ENCODE measurements at regions of chr16 and their contacts with region 1.

Region 1: GRCh38 chr16:2777231-2777902 is at the start of gene ELOB:
- DNase-seq: peak; percentile 88 to 95 (median 92)
- ATAC-seq: peak; percentile 82 to 95 (median 92)
- H3K4me3 ChIP-seq: peak within 1 kb of the TSS; percentile 65 to 100 (median 93)
- H3K27ac ChIP-seq: peak within 1 kb of the TSS; percentile 96 to 100 (median 100)
- H3K4me1 ChIP-seq: peaks cover 2 to 44% (median 26%) of the 10 kb centered on the region in 12 donors
- H3K27me3 ChIP-seq: no peaks in the 10 kb centered on the region
- CTCF ChIP-seq: no peak
- POLR2A ChIP-seq: peak; percentile 5 to 80
- total RNA-seq, gene ELOB: 213 to 1,067 (median 294) TPM

Region 2: GRCh38 chr16:2720719-2721633 is 56.4 kb before region 1 on chr16:
- intact Hi-C with region 1: loop called in 1 of 10 experiments (anchors 2 kb)
- DNase-seq: peak; percentile 83 to 91 (median 86)
- ATAC-seq: peak; percentile 68 to 92 (median 84)
- H3K4me3 ChIP-seq: peak overlapping the region; percentile 48 to 90 (median 66)
- H3K27ac ChIP-seq: peak overlapping the region in 11 of 12 donors; percentile 22 to 85 (median 74)
- H3K4me1 ChIP-seq: peaks cover 0 to 27% (median 13%) of the 10 kb centered on the region in 12 donors
- H3K27me3 ChIP-seq: peaks cover 0 to 8% (median 0%) of the 10 kb centered on the region in 9 donors
- CTCF ChIP-seq: peak; percentile 34 to 92 (median 80)
- POLR2A ChIP-seq: no peak

Region 3: GRCh38 chr16:2911580-2912329 is 134.4 kb after region 1 on chr16 and contains the start of gene FLYWCH1:
- intact Hi-C with region 1: loop called in 1 of 10 experiments (anchors 10 kb)
- DNase-seq: peak; percentile 98 to 99 (median 99)
- ATAC-seq: peak; percentile 94 to 99 (median 98)
- H3K4me3 ChIP-seq: peak within 1 kb of the TSS; percentile 64 to 97 (median 92)
- H3K27ac ChIP-seq: peak within 1 kb of the TSS; percentile 72 to 95 (median 90)
- H3K4me1 ChIP-seq: peaks cover 0 to 34% (median 14%) of the 10 kb centered on the region in 12 donors
- H3K27me3 ChIP-seq: no peaks in the 10 kb centered on the region
- CTCF ChIP-seq: no peak
- POLR2A ChIP-seq: peak in 1 of 2 donors; percentile 90
- total RNA-seq, gene FLYWCH1: 26.3 to 48.4 (median 34.2) TPM